Activated B cell treated with CpG ODN at 0.5 μM for 24 hours (primary cell): ENCODE measurements at regions of chr17 and their contacts with region 1.

Region 1: GRCh38 chr17:68273722-68274121 is 17.2 kb downstream of the SLC16A6 start:
- DNase-seq: no peak
- ATAC-seq: no peak
- H3K4me3 Mint-ChIP-seq: no peak overlapping the region
- H3K27ac Mint-ChIP-seq: no peak overlapping the region
- H3K4me1 Mint-ChIP-seq: no peaks in the 10 kb centered on the region
- H3K27me3 Mint-ChIP-seq: no peaks in the 10 kb centered on the region
- CTCF ChIP-seq: no peak

Region 2: GRCh38 chr17:68184816-68185436 is 88.8 kb before region 1 on chr17:
- CTCF ChIA-PET with region 1: no interaction called
- POLR2A ChIA-PET with region 1: no interaction called
- intact Hi-C with region 1: no loop called
- DNase-seq: no peak
- ATAC-seq: peak; percentile 69
- H3K4me3 Mint-ChIP-seq: peak overlapping the region; percentile 62
- H3K27ac Mint-ChIP-seq: peak overlapping the region; percentile 91
- H3K4me1 Mint-ChIP-seq: peaks cover 66% of the 10 kb centered on the region
- H3K27me3 Mint-ChIP-seq: no peaks in the 10 kb centered on the region
- CTCF ChIP-seq: no peak

Region 3: DNA sequence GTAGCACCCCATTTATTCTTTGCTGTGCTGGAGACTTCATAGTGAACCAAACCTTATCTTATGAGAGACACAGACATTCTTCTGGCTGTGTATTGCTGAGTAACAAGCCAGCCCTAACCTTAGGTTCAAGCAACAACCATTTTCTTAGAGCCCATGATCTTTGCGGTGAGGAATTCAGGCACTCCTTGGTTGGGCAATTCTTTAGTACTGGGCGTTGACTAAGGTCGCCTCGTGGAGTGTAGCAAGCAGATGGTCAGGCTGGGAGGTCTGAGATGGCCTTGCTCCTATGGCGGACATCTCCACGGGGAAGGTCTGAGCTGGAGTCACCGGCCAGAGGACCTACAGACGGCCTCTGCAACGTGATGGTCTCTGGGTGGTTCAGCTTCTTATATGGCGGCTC is 60.7 kb after region 1 on chr17:
- CTCF ChIA-PET with region 1: no interaction called
- POLR2A ChIA-PET with region 1: interaction called, 14 read pairs
- intact Hi-C with region 1: no loop called
- DNase-seq: no peak
- ATAC-seq: no peak
- H3K4me3 Mint-ChIP-seq: no peak overlapping the region
- H3K27ac Mint-ChIP-seq: no peak overlapping the region
- H3K4me1 Mint-ChIP-seq: no peaks in the 10 kb centered on the region
- H3K27me3 Mint-ChIP-seq: no peaks in the 10 kb centered on the region
- CTCF ChIP-seq: no peak

Region 4: GRCh38 chr17:69539781-69540319 is 1266.1 kb after region 1 on chr17:
- CTCF ChIA-PET with region 1: no interaction called
- POLR2A ChIA-PET with region 1: no interaction called
- intact Hi-C with region 1: no loop called
- DNase-seq: no peak
- ATAC-seq: no peak
- H3K4me3 Mint-ChIP-seq: no peak overlapping the region
- H3K27ac Mint-ChIP-seq: no peak overlapping the region
- H3K4me1 Mint-ChIP-seq: no peaks in the 10 kb centered on the region
- H3K27me3 Mint-ChIP-seq: no peaks in the 10 kb centered on the region
- CTCF ChIP-seq: no peak